Right ventricle myocardium inferior (tissue), 1 donor: ENCODE measurements at regions of chr10 and their contacts with region 1.

Region 1: DNA sequence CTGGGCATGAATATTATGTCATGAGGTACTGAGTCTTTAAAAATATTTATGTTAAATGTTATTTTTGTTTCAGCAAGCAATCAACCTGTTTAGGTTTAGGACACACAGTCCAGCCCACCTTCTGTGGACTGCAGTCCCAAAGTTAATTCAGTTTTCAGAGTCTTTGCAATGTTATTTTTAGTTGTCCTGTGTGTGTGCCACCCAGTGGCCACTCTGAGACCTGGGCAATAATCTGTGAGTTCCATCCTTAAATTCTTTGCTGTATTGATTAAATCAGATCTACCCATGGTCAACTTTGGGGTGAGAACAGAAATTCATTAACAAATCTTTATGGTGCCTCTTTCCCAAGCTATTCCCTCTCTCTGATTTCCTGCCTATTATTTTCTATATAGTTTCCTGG is 415.1 kb downstream of the CCSER2 start:
- DNase-seq: no peak
- ATAC-seq: no peak

Region 2: GRCh38 chr10:84613336-84614021 is 130.0 kb before region 1 on chr10:
- intact Hi-C with region 1: loop called (anchors 2 kb)
- DNase-seq: no peak
- ATAC-seq: peak; percentile 86

Region 3: DNA sequence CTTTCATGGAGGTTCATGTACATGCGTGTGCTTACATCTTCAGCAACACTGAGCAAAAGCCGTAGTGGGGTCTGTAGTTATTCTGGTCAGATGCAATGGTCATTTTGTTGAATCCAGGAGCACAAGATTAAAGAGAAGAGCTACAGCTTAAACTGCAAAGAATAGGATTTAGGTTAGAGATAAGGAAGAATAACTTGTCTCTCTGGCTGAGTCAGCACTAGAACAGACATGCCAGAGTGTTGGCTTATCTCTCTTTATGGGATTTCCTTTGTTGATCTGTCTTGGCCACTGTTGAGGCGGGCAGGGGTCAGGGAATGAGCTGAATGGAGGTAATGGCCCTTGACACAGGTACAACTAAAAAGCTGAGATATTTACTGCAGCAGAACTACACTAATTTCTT is 58.4 kb after region 1 on chr10:
- intact Hi-C with region 1: no loop called
- DNase-seq: no peak
- ATAC-seq: no peak

Region 4: DNA sequence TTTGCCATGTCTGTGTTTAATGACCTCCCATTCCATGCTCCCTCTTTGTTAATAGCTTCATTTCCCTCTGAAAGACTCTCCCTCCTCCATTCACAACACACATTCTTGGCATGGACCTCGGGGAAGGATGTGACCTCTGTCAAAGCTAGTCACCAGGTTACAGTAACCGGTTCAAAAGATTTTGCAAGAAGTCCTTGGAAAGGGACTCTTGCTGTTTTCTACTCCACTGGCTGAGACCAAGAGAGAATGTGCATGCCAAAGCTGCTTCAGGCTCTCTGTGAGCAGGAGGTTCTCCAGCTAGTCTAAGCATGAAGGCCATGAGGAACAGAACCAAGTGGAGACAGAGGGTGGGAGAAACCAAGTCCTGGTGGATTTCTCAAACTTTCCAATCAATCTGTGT is 317.5 kb after region 1 on chr10:
- intact Hi-C with region 1: no loop called
- DNase-seq: no peak
- ATAC-seq: no peak